ENCODE measurements at regions of chr2 and their contacts with region 1.

Region 1: GRCh38 chr2:46416739-46417403 is 62.5 kb upstream of the TMEM247 start:
- DNase-seq: peak; percentile 36
- ATAC-seq: 0 out of 2 replicates have a peak, but pooled peaks have one; percentile 27
- H3K4me3 ChIP-seq: no peak overlapping the region
- H3K27ac ChIP-seq: no peak overlapping the region
- H3K4me1 ChIP-seq: no peaks in the 10 kb centered on the region
- H3K27me3 ChIP-seq: no peaks in the 10 kb centered on the region
- CTCF ChIP-seq: no peak
- POLR2A ChIP-seq: no peak
- RAD21 ChIP-seq: no peak

Region 2: DNA sequence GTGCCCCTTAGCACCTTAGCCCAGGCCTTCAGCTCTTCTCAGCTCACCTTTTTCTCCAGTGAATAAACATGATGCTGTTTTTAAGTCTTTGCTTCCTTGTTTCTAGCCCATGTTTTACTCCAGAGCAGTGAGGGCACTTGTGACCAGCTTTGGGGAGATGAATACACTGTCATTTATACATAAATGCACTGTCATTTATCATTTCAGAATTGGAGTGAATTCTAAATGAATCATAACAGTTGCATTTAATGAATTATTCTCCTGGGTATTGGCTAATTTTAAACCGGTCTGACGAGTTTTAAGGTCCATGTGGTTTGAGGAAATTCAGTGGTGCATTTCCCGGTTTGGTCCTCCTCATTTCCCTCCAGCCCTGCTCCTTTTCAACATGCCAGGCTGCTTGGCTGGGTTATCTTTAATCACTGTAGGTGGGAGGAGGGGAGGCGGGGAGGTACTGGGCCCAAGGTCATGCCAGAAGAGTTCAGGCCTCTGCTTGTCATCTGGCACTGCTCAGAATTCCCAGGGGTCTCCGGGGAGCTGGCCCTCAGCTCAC is 741.5 kb before region 1 on chr2:
- CTCF ChIA-PET with region 1: no interaction called
- POLR2A ChIA-PET with region 1: no interaction called
- dilution Hi-C with region 1: no loop called
- in situ Hi-C with region 1: no loop called
- intact Hi-C with region 1: loop called (anchors 5 kb)
- DNase-seq: no peak
- ATAC-seq: no peak
- H3K4me3 ChIP-seq: no peak overlapping the region
- H3K27ac ChIP-seq: no peak overlapping the region
- H3K4me1 ChIP-seq: no peaks in the 10 kb centered on the region
- H3K27me3 ChIP-seq: no peaks in the 10 kb centered on the region
- CTCF ChIP-seq: no peak
- POLR2A ChIP-seq: no peak
- RAD21 ChIP-seq: no peak

Region 3: DNA sequence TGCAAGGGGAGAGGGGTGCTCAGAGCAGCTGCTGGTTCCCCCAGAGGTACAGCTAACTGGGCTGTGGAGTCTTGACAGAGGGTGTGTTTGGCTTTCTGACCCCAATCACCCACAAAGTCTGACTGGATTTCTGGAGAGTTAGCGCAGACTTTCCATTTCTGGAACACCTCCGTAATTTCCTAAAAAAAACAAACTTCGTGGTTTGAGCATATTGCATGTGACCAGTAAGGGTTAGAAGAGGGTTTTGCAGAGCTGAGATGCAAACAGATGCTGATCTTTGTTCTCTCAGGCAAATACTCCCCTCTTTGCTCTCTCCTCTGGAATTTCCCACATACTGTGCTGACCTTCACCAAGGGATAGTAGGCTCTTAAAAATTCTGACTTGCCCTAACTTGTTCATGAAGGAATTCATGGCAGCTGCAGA is 18.0 kb after region 1 on chr2:
- CTCF ChIA-PET with region 1: no interaction called
- POLR2A ChIA-PET with region 1: no interaction called
- dilution Hi-C with region 1: no loop called
- in situ Hi-C with region 1: no loop called
- intact Hi-C with region 1: loop called (anchors 2 kb)
- DNase-seq: peak; percentile 97
- ATAC-seq: peak; percentile 97
- H3K4me3 ChIP-seq: no peak overlapping the region
- H3K27ac ChIP-seq: peak overlapping the region; percentile 100; the same call in 1 of the 2 replicates
- H3K4me1 ChIP-seq: peaks cover 22% of the 10 kb centered on the region
- H3K27me3 ChIP-seq: no peaks in the 10 kb centered on the region
- CTCF ChIP-seq: no peak
- POLR2A ChIP-seq: no peak
- RAD21 ChIP-seq: no peak